ENCODE measurements at regions of chr12 and their contacts with region 1.

Region 1: GRCh38 chr12:67943226-67943892 is 45.9 kb upstream of the IFNG-AS1 start:
- DNase-seq: peak; percentile 38
- H3K4me3 ChIP-seq: no peak overlapping the region
- H3K27ac ChIP-seq: no peak overlapping the region
- H3K27me3 ChIP-seq: peaks cover 5% of the 10 kb centered on the region
- CTCF ChIP-seq: peak; percentile 74

Region 2: DNA sequence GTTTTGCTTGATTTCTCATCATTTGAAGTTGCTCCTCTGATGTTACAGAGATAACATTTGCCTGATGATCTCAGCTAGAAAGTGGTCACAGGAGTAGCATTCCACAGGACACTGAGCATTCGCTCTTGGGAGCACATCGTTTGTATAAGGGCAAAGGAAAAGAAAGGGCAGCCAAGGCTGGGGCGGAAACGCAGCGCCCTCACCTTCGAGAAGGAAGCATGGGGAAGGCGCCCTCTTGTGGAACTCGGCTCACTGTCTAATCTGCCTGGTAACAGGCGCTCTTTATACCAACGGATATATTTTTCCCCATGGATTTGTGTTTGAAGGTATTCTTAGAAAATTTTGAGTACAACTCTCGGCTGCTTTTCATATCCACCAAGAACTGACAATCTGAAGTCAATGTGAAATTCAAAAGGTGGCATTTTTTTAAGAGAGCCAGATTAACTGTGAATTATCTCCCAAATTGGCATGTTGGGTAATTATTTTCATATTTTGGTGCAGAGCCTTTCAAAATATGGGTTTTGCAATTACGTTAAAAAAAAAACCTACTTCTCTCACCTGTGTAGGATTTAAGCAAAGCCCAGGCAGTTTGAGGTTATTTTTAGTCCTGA is 501.5 kb before region 1 on chr12:
- CTCF ChIA-PET with region 1: interaction called, 14 read pairs
- POLR2A ChIA-PET with region 1: no interaction called
- DNase-seq: peak; percentile 67
- H3K4me3 ChIP-seq: no peak overlapping the region
- H3K27ac ChIP-seq: no peak overlapping the region
- H3K27me3 ChIP-seq: no peaks in the 10 kb centered on the region
- CTCF ChIP-seq: peak; percentile 91

Region 3: DNA sequence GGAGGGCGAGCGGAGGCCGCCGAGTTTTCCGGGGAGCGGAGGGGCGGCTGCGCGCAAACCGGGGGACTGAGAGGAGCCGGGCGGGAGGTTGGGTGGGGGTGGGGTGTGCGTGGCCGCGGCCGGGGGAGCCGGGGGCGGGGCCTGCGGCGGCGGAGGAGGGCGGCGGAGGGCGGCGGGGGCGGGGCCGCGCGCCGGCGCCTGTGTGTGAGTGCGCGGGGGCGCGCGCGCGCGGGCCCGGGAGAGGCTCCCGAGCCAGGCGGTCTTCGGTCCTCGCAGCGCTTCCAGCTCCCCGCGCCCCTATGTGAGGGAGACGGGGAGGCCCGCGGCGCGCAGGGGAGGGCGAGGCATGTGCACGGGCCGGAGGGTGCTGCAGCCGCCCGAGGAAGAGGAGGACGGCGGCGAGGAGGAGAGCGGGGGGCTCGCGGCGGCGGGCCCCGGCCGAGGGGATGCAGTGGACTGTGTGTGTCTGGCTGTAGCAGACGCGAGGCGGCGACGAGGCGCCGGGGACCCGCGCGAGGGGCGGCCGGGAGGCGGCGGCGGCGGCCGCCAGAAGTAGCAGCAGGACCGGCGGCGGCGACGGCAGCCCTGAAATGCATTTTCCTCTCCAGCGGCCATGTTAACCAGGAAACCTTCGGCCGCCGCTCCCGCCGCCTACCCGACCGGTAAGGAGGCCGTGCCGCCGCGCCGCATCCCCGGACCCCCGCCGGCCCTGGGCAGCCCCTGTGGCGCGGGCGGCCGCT is 294.7 kb before region 1 on chr12 and contains the start of gene DYRK2:
- CTCF ChIA-PET with region 1: interaction called, 10 read pairs
- POLR2A ChIA-PET with region 1: no interaction called
- DNase-seq: no peak
- H3K4me3 ChIP-seq: peak within 1 kb of the TSS; percentile 83
- H3K27ac ChIP-seq: peak within 1 kb of the TSS; percentile 73
- H3K27me3 ChIP-seq: no peaks in the 10 kb centered on the region
- CTCF ChIP-seq: no peak
- polyA plus RNA-seq, gene DYRK2: 15.3 and 17.9 TPM in 2 replicates

Region 4: DNA sequence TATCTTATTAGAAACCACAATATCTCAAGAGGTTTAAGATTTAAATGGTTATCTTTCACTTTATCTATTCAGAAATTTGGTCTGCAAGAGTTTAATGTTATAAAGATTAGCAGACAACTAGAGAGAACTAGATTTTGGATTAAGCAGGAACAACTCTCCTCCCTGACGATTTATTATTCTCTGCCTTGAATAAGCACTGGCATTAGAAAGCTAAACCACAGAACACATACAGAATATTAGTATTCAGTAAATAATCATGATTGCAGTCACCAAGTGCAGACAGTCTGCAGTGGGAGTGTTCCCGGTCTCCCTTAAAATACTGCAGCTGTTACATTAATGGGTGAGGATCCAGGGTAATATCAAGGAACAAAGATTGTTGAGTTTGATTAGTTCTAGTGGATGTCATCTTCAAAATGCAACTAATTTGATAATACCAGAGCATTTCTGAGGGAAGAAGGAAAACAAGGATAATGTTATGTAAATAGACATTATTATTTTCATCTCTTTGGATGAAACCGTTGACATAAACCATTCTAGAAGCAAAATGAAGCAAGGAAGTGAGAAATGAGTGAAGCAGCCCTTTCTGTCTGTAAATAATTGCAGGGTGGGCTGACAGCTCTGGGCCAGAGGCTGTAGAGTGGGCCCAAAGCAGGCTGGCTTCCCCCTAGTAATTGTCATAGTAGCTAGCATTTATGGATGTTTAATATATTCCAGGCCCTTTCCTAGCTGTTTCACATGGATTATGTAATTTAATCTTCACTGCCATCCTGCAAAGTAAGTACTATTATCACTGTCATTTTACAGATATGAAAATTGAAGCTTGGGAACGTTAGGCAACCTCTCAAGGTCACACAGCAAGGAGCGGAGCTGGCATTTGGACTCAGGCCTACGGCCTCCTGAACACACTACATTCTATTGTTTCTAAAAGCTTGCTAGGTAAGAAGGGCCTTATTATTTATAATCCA is 215.4 kb before region 1 on chr12:
- CTCF ChIA-PET with region 1: no interaction called
- POLR2A ChIA-PET with region 1: no interaction called
- DNase-seq: no peak
- H3K4me3 ChIP-seq: no peak overlapping the region
- H3K27ac ChIP-seq: no peak overlapping the region
- H3K27me3 ChIP-seq: no peaks in the 10 kb centered on the region
- CTCF ChIP-seq: no peak

Region 5: DNA sequence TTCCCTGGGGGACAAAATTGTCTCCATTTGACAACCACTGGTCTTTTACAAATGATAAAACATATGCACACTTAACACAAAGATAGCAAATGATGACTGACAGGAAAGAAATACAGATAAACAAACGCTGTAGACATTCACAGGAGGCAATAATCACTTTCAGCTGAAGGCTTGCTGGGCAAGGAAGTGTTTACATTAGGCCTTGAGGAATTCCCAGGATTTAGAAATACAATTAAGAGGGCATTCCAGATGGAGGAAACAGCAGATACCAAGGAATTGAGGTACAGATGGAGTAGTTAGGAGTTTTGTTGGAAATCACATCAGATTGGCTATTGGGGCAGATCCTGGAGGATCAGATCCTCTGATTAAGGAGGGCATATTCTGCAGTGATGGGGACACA is 200.9 kb before region 1 on chr12:
- CTCF ChIA-PET with region 1: no interaction called
- POLR2A ChIA-PET with region 1: no interaction called
- DNase-seq: no peak
- H3K4me3 ChIP-seq: no peak overlapping the region
- H3K27ac ChIP-seq: peak overlapping the region; percentile 11
- H3K27me3 ChIP-seq: no peaks in the 10 kb centered on the region
- CTCF ChIP-seq: no peak

Region 6: GRCh38 chr12:67804168-67804567 is 139.2 kb before region 1 on chr12:
- CTCF ChIA-PET with region 1: no interaction called
- POLR2A ChIA-PET with region 1: no interaction called
- DNase-seq: no peak
- H3K4me3 ChIP-seq: no peak overlapping the region
- H3K27ac ChIP-seq: no peak overlapping the region
- H3K27me3 ChIP-seq: no peaks in the 10 kb centered on the region
- CTCF ChIP-seq: no peak

Region 7: GRCh38 chr12:67919406-67919805 is 24.0 kb before region 1 on chr12:
- CTCF ChIA-PET with region 1: interaction called, 21 read pairs
- POLR2A ChIA-PET with region 1: no interaction called
- DNase-seq: no peak
- H3K4me3 ChIP-seq: no peak overlapping the region
- H3K27ac ChIP-seq: no peak overlapping the region
- H3K27me3 ChIP-seq: no peaks in the 10 kb centered on the region
- CTCF ChIP-seq: no peak

Region 8: DNA sequence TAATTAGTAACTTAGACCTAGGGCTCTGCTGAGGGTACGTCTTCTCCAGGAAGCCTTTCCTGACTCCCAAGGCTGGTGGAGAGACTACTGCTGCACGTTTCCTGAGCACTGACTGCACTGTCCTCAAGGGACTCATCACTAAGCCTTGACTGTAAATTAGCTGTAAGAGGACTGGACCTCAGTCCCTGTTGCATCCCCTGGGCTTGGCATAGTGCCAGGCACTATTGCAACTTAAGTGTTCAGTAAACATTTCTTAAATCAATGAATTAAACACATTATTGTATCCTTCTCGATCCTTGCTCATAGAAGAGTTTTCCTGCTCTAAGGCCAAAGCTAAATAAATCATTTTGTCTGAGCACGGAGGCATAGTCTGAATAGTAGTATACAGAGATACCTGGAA is 14.0 kb after region 1 on chr12:
- CTCF ChIA-PET with region 1: interaction called, 12 read pairs
- POLR2A ChIA-PET with region 1: no interaction called
- DNase-seq: no peak
- H3K4me3 ChIP-seq: no peak overlapping the region
- H3K27ac ChIP-seq: no peak overlapping the region
- H3K27me3 ChIP-seq: no peaks in the 10 kb centered on the region
- CTCF ChIP-seq: no peak